A549 (cell line): ENCODE measurements at regions of chr1 and their contacts with region 1.

Region 1: GRCh38 chr1:210373885-210374599 is 45.3 kb downstream of the HHAT start:
- DNase-seq: peak; percentile 80 to 97
- ATAC-seq: peak; percentile 80 to 88
- H3K4me3 ChIP-seq: no peak overlapping the region
- H3K27ac ChIP-seq: peak overlapping the region; percentile 86 to 90
- H3K4me1 ChIP-seq: peaks cover 41% of the 10 kb centered on the region
- CTCF ChIP-seq: peak; percentile 96
- EP300 ChIP-seq: peak in 1 of 2 experiments; percentile 36; a peak in 1 of 5 replicates
- POLR2A ChIP-seq: peak; percentile 13
- RAD21 ChIP-seq: peak; percentile 46 to 58; a peak in 4 of 5 replicates

Region 2: DNA sequence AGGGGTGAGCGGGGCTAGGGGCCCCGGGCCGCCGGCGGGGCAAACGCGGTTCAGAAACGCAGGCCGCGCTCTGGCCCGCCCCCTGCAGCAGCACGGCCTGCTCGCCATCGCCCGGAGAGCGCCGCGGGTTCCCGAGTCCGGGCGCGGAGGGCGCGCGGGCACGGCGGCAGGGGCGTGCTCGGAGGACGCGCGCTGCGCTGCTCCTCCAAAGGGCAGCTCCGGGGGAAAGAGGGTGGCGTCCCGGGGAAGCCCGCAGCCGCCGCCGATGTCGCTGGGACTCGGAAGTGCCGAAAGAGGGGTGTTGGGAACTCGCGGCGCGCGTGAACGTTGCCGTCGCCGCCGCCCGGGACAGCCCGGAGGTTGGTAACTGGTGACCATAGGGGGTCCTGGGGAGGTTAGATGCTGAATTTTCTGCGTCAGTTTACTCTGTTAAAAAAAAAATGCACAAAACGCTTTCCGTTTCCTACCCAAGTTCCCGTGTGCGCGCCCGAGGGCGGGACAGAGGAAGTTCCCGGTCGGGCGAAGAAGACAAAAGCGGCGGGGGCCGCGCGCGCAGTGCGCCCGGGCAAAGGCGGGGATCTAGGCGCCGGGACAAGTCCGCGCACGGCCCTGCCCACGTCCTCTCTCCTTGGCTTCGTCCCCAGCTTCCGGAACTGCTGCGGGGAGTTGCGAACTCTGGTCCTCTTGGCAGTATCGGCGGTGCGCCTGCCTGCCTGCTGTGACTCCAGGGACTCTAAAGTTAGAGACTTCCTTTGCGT is 45.1 kb before region 1 on chr1 and contains the start of gene HHAT:
- CTCF ChIA-PET with region 1: no interaction called
- POLR2A ChIA-PET with region 1: interaction called, 11 read pairs
- DNase-seq: peak; percentile 75 to 81
- ATAC-seq: peak; percentile 93 to 96
- H3K4me3 ChIP-seq: peak within 1 kb of the TSS; percentile 60
- H3K27ac ChIP-seq: peak within 1 kb of the TSS; percentile 87 to 94
- H3K4me1 ChIP-seq: peaks cover 17% of the 10 kb centered on the region; the same call in 2 of the 3 replicates
- CTCF ChIP-seq: no peak
- EP300 ChIP-seq: no peak
- POLR2A ChIP-seq: peak; percentile 49
- RAD21 ChIP-seq: no peak
- polyA plus RNA-seq, gene HHAT: 4.5 and 5.0 TPM in 2 replicates

Region 3: DNA sequence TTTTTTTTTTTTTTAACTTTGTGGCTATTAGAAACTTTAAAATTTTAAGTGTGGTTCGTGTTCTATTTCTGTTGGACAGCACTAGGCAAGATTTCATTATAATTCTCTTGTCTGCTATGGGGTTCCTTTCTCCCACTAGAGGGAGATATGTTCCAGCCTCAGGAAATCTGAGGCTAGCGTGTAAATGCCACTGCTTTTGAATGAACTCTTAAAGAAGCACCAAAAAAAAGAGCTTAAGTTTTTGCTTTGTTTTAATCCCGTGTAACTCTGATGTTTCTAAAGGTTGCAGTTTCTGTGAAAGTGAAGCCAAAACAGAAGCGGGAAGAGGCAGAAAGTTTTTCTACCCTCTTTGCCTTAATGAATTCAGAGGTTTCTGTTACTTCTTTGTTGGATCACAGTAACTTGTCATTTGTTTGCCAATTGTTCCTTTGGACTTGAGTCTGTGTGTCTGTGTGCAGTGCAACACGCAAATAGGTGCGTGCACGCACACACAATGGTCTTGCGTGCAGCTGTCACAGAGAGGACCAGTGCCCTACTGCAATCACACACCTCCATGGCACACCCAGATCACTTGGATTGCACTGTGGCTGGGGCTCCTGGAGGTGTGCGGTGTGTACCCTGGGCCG is 13.1 kb before region 1 on chr1:
- CTCF ChIA-PET with region 1: interaction called, 54 read pairs
- POLR2A ChIA-PET with region 1: interaction called, 10 read pairs
- DNase-seq: peak; percentile 45 to 71
- ATAC-seq: peak; percentile 89 to 95
- H3K4me3 ChIP-seq: no peak overlapping the region
- H3K27ac ChIP-seq: peak overlapping the region in 1 of 2 experiments; percentile 9; a peak in 1 of 6 replicates
- H3K4me1 ChIP-seq: no peaks in the 10 kb centered on the region
- CTCF ChIP-seq: peak; percentile 74
- EP300 ChIP-seq: no peak
- POLR2A ChIP-seq: no peak
- RAD21 ChIP-seq: peak; percentile 68 to 70

Region 4: DNA sequence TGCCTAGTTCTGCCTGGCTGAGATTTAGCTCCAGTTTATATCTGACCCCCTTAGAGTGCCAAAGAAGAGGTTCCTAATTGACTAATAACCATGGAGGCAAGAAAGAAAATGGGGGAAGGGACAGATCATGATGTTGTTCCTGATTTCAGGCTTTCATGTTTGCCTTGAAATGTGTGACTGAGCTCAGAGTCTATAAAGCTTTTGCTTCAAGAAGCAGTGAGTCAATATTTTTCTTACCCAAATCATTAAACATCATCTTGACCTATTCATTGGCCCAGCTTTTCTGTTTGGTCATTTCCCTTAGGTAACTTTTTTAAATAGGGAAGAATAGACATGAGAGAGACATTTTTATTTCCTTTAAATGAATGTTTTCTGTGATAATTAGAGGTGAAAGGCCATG is 10.6 kb after region 1 on chr1:
- CTCF ChIA-PET with region 1: interaction called, 66 read pairs
- POLR2A ChIA-PET with region 1: interaction called, 25 read pairs
- DNase-seq: no peak
- ATAC-seq: no peak
- H3K4me3 ChIP-seq: no peak overlapping the region
- H3K27ac ChIP-seq: 0 out of 6 replicates have a peak overlapping the region, but pooled peaks of 1 of the 2 experiments have one; percentile 5
- H3K4me1 ChIP-seq: peaks cover 13% of the 10 kb centered on the region; the same call in 2 of the 3 replicates
- CTCF ChIP-seq: no peak
- EP300 ChIP-seq: no peak
- POLR2A ChIP-seq: no peak
- RAD21 ChIP-seq: no peak

Region 5: GRCh38 chr1:210400043-210400840 is 26.2 kb after region 1 on chr1:
- CTCF ChIA-PET with region 1: interaction called, 274 read pairs
- POLR2A ChIA-PET with region 1: interaction called, 21 read pairs
- DNase-seq: peak; percentile 71 to 88
- ATAC-seq: peak; percentile 98 to 100
- H3K4me3 ChIP-seq: no peak overlapping the region
- H3K27ac ChIP-seq: no peak overlapping the region
- H3K4me1 ChIP-seq: no peaks in the 10 kb centered on the region; the same call in 2 of the 3 replicates
- CTCF ChIP-seq: peak; percentile 87
- EP300 ChIP-seq: no peak
- POLR2A ChIP-seq: no peak
- RAD21 ChIP-seq: peak; percentile 85 to 88

Region 6: GRCh38 chr1:210438928-210439809 is 65.1 kb after region 1 on chr1:
- CTCF ChIA-PET with region 1: no interaction called
- POLR2A ChIA-PET with region 1: interaction called, 12 read pairs
- DNase-seq: peak in 1 of 2 experiments; percentile 82
- ATAC-seq: peak; percentile 93 to 95
- H3K4me3 ChIP-seq: no peak overlapping the region
- H3K27ac ChIP-seq: peak overlapping the region; percentile 72 to 85
- H3K4me1 ChIP-seq: peaks cover 36% of the 10 kb centered on the region
- CTCF ChIP-seq: no peak
- EP300 ChIP-seq: peak; percentile 84 to 95; a peak in 3 of 5 replicates
- POLR2A ChIP-seq: no peak
- RAD21 ChIP-seq: peak in 1 of 2 experiments; percentile 16; a peak in 2 of 5 replicates

Region 7: GRCh38 chr1:210448297-210448892 is 74.4 kb after region 1 on chr1:
- CTCF ChIA-PET with region 1: interaction called, 24 read pairs
- POLR2A ChIA-PET with region 1: interaction called, 5 read pairs
- DNase-seq: peak; percentile 36 to 58
- ATAC-seq: peak; percentile 59 to 90; a peak in 4 of 6 replicates
- H3K4me3 ChIP-seq: no peak overlapping the region
- H3K27ac ChIP-seq: peak overlapping the region; percentile 18 to 72; a peak in 4 of 6 replicates
- H3K4me1 ChIP-seq: peaks cover 30% of the 10 kb centered on the region
- CTCF ChIP-seq: peak; percentile 89
- EP300 ChIP-seq: no peak
- POLR2A ChIP-seq: no peak
- RAD21 ChIP-seq: peak; percentile 92